A673 (cell line): ENCODE measurements at regions of chr19 and their contacts with region 1.

Region 1: GRCh38 chr19:34733826-34734600 is at the start of gene ZNF181:
- DNase-seq: peak; percentile 92
- H3K4me3 ChIP-seq: peak within 1 kb of the TSS; percentile 74
- H3K27ac ChIP-seq: peak within 1 kb of the TSS; percentile 91
- H3K4me1 ChIP-seq: no peaks in the 10 kb centered on the region
- H3K27me3 ChIP-seq: no peaks in the 10 kb centered on the region
- CTCF ChIP-seq: no peak
- total RNA-seq, gene ZNF181: 6.7 and 8.2 TPM in 2 replicates

Region 2: GRCh38 chr19:34692549-34692948 is 41.5 kb before region 1 on chr19:
- CTCF ChIA-PET with region 1: no interaction called
- POLR2A ChIA-PET with region 1: no interaction called
- intact Hi-C with region 1: no loop called
- DNase-seq: no peak
- H3K4me3 ChIP-seq: no peak overlapping the region
- H3K27ac ChIP-seq: no peak overlapping the region
- H3K4me1 ChIP-seq: no peaks in the 10 kb centered on the region
- H3K27me3 ChIP-seq: peaks cover 9% of the 10 kb centered on the region
- CTCF ChIP-seq: no peak

Region 3: GRCh38 chr19:34772697-34773554 is 38.9 kb after region 1 on chr19 and contains the start of gene ZNF599:
- CTCF ChIA-PET with region 1: no interaction called
- POLR2A ChIA-PET with region 1: no interaction called
- intact Hi-C with region 1: loop called (anchors 2 kb)
- DNase-seq: peak; percentile 94
- H3K4me3 ChIP-seq: peak within 1 kb of the TSS; percentile 84
- H3K27ac ChIP-seq: peak within 1 kb of the TSS; percentile 70
- H3K4me1 ChIP-seq: no peaks in the 10 kb centered on the region
- H3K27me3 ChIP-seq: no peaks in the 10 kb centered on the region
- CTCF ChIP-seq: no peak
- total RNA-seq, gene ZNF599: 6.0 and 8.0 TPM in 2 replicates

Region 4: DNA sequence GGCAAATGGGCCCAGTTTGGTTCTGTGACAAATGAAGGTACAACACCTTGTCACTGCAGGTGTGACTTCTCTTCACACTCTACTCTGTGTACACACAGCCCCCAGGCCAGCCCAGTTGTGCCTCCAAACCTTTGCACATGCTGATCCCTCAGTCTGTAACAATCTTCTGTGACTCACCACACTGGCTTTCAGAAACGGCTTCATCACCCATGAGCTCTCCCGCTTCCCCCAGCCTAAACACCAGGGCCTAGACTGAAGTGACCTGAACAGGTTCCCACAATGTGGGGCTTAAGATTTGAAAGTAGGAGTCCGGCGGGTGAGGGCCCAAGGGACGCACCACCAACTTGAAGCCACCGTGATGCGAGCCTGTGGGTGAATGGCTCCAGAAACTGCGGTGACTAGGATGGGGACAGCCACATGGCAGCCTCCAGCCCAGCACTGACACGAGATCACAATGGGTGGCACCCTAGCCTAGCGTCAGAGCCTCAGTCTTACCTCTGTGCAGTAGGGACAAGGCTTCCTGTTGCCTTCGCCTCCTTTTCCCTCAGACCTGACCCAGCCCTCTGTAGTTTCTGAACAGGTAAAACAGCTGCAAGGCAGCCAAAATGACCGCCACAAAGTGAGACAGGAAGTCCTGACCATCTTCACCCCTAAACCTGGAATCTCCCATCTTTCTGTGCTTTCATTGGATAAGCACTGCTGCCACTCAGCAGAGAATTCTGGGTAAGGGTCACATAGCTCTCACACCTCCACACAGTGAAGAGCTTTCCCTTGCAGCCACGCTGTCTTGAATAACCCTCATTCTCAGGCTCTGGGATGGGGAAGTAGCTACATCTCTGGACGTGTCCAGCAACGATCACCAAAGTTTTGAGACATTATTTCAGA is 73.2 kb after region 1 on chr19:
- CTCF ChIA-PET with region 1: no interaction called
- POLR2A ChIA-PET with region 1: no interaction called
- intact Hi-C with region 1: no loop called
- DNase-seq: no peak
- H3K4me3 ChIP-seq: no peak overlapping the region
- H3K27ac ChIP-seq: no peak overlapping the region
- H3K4me1 ChIP-seq: no peaks in the 10 kb centered on the region
- H3K27me3 ChIP-seq: no peaks in the 10 kb centered on the region
- CTCF ChIP-seq: no peak

Region 5: GRCh38 chr19:34818270-34818669 is 84.3 kb after region 1 on chr19:
- CTCF ChIA-PET with region 1: no interaction called
- POLR2A ChIA-PET with region 1: no interaction called
- intact Hi-C with region 1: no loop called
- DNase-seq: no peak
- H3K4me3 ChIP-seq: no peak overlapping the region
- H3K27ac ChIP-seq: no peak overlapping the region
- H3K4me1 ChIP-seq: no peaks in the 10 kb centered on the region
- H3K27me3 ChIP-seq: no peaks in the 10 kb centered on the region
- CTCF ChIP-seq: no peak